ENCODE measurements at regions of chr13 and their contacts with region 1.

Region 1: GRCh38 chr13:113458253-113459065 is 5.2 kb upstream of the ADPRHL1 start:
- DNase-seq: peak; percentile 89
- H3K4me3 ChIP-seq: no peak overlapping the region
- H3K27ac ChIP-seq: peak overlapping the region in 1 of 2 experiments; percentile 36; a peak in 1 of 4 replicates
- H3K4me1 ChIP-seq: peaks cover 0 to 22% of the 10 kb centered on the region in 2 experiments; a peak in 3 of 4 replicates
- H3K27me3 ChIP-seq: no peaks in the 10 kb centered on the region
- CTCF ChIP-seq: peak; percentile 64
- EP300 ChIP-seq: no peak
- RAD21 ChIP-seq: peak; percentile 62

Region 2: GRCh38 chr13:113468472-113469201 is 10.2 kb after region 1 on chr13:
- CTCF ChIA-PET with region 1: interaction called, 24 read pairs
- POLR2A ChIA-PET with region 1: no interaction called
- DNase-seq: no peak
- H3K4me3 ChIP-seq: no peak overlapping the region
- H3K27ac ChIP-seq: no peak overlapping the region
- H3K4me1 ChIP-seq: no peaks in the 10 kb centered on the region
- H3K27me3 ChIP-seq: no peaks in the 10 kb centered on the region
- CTCF ChIP-seq: no peak
- EP300 ChIP-seq: no peak
- RAD21 ChIP-seq: no peak

Region 3: GRCh38 chr13:113483504-113484293 is 25.2 kb after region 1 on chr13:
- CTCF ChIA-PET with region 1: interaction called, 41 read pairs
- POLR2A ChIA-PET with region 1: interaction called, 3 read pairs
- DNase-seq: no peak
- H3K4me3 ChIP-seq: no peak overlapping the region
- H3K27ac ChIP-seq: no peak overlapping the region
- H3K4me1 ChIP-seq: peaks cover 4 to 35% of the 10 kb centered on the region in 2 experiments; a peak in 3 of 4 replicates
- H3K27me3 ChIP-seq: no peaks in the 10 kb centered on the region
- CTCF ChIP-seq: no peak
- EP300 ChIP-seq: no peak
- RAD21 ChIP-seq: no peak

Region 4: GRCh38 chr13:113520571-113520970 is 62.1 kb after region 1 on chr13:
- CTCF ChIA-PET with region 1: interaction called, 10 read pairs
- POLR2A ChIA-PET with region 1: no interaction called
- DNase-seq: no peak
- H3K4me3 ChIP-seq: no peak overlapping the region
- H3K27ac ChIP-seq: no peak overlapping the region
- H3K4me1 ChIP-seq: no peaks in the 10 kb centered on the region
- H3K27me3 ChIP-seq: no peaks in the 10 kb centered on the region
- CTCF ChIP-seq: no peak
- EP300 ChIP-seq: no peak
- RAD21 ChIP-seq: no peak

Region 5: DNA sequence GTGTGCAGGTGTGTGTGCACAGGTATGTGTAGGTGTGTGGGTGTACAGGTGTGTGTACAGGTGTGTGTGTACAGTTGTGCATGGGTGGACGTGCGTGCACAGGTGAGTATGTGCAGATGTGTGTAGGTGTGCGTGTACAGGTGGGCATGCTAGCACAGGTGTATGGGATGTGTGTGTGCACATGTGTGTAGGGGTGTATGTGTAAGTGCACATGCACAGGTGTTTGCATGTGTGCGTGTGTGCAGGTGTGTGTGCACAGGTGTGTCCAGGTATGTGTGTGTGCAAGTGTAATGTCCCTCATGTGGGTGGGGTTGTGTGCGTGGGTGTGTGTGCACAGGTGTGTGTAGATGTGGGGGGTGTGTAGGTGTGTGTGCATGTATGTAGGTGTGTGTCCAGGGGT is 98.6 kb after region 1 on chr13:
- CTCF ChIA-PET with region 1: interaction called, 128 read pairs
- POLR2A ChIA-PET with region 1: no interaction called
- DNase-seq: no peak
- H3K4me3 ChIP-seq: no peak overlapping the region
- H3K27ac ChIP-seq: no peak overlapping the region
- H3K4me1 ChIP-seq: peaks cover 0 to 3% of the 10 kb centered on the region in 2 experiments; a peak in 1 of 4 replicates
- H3K27me3 ChIP-seq: no peaks in the 10 kb centered on the region
- CTCF ChIP-seq: no peak
- EP300 ChIP-seq: no peak
- RAD21 ChIP-seq: no peak

Measured in SK-N-SH (cell line).